ENCODE measurements at regions of chr11 and their contacts with region 1.

Region 1: GRCh38 chr11:86193297-86194095 is 51.1 kb upstream of the EED start:
- DNase-seq: peak; percentile 31 to 74 (median 63)
- H3K4me3 ChIP-seq: peak overlapping the region; percentile 33
- H3K4me3 Mint-ChIP-seq: peak overlapping the region; percentile 73 to 94 (median 92)
- H3K27ac ChIP-seq: peak overlapping the region; percentile 38
- H3K27ac Mint-ChIP-seq: peak overlapping the region; percentile 29 to 91 (median 84)
- H3K4me1 ChIP-seq: peaks cover 12% of the 10 kb centered on the region
- H3K4me1 Mint-ChIP-seq: peaks cover 13 to 15% (median 14%) of the 10 kb centered on the region in 3 donors
- H3K27me3 ChIP-seq: no peaks in the 10 kb centered on the region
- H3K27me3 Mint-ChIP-seq: no peaks in the 10 kb centered on the region

Region 2: GRCh38 chr11:86035164-86035563 is 158.3 kb before region 1 on chr11:
- CTCF ChIA-PET with region 1: interaction called, 10 read pairs
- POLR2A ChIA-PET with region 1: no interaction called
- DNase-seq: no peak
- H3K4me3 ChIP-seq: no peak overlapping the region
- H3K4me3 Mint-ChIP-seq: peak overlapping the region in 3 of 7 donors; percentile 1 to 8 (median 4)
- H3K27ac ChIP-seq: no peak overlapping the region
- H3K27ac Mint-ChIP-seq: peak overlapping the region in 6 of 8 donors; percentile 4 to 78 (median 69)
- H3K4me1 ChIP-seq: peaks cover 27% of the 10 kb centered on the region
- H3K4me1 Mint-ChIP-seq: peaks cover 61 to 80% (median 78%) of the 10 kb centered on the region in 3 donors
- H3K27me3 ChIP-seq: no peaks in the 10 kb centered on the region
- H3K27me3 Mint-ChIP-seq: no peaks in the 10 kb centered on the region

Region 3: GRCh38 chr11:86041975-86042378 is 151.5 kb before region 1 on chr11:
- CTCF ChIA-PET with region 1: interaction called, 65 read pairs
- POLR2A ChIA-PET with region 1: interaction called, 6 read pairs
- DNase-seq: peak in 4 of 5 donors; percentile 37 to 71 (median 65)
- H3K4me3 ChIP-seq: no peak overlapping the region
- H3K4me3 Mint-ChIP-seq: peak overlapping the region in 3 of 7 donors; percentile 0 to 15 (median 1)
- H3K27ac ChIP-seq: no peak overlapping the region
- H3K27ac Mint-ChIP-seq: peak overlapping the region; percentile 19 to 83 (median 54)
- H3K4me1 ChIP-seq: peaks cover 52% of the 10 kb centered on the region
- H3K4me1 Mint-ChIP-seq: peaks cover 65 to 81% (median 81%) of the 10 kb centered on the region in 3 donors
- H3K27me3 ChIP-seq: no peaks in the 10 kb centered on the region
- H3K27me3 Mint-ChIP-seq: no peaks in the 10 kb centered on the region

Region 4: DNA sequence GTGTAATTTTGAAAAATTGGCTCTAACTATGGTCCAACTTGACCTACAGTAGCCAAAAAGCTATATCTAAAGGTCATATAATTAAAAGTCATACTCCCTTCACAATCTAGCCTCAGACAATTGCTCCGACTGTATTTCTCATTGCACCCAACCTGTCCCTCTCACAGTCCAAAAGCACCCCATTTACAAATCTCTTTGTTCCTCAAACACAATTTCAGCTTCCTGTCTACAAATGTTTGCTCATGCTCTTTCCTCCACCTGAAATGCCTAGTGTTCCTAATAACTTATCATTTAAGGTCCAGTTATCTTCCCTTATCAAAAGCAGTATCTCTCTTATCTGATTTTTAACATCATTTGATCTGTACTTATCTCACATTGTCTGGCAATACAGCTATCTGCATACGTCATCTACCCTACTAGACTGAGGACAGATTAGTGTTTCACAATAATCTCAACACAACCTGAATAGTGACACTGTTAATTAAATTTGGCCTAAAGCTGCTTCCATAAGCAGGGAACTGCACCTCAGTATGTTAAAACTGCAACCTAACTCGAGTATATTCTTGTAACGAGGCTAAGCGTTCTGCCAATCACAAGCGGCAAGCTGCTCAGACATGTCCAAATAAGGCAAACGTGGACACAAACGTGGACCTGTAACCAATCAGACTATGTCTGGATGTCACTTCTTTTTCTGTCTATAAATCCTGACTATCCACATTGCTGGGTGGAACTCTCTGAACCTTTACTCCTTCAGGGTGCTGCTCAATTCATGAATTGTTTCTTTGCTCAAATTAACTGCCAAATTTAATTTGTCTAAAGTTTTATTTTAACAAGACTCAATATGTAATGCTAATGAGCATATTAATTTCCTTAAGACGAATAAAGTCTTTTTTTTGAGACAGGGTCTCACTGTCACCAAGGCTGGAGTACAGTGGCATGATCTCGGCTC is 140.5 kb before region 1 on chr11:
- CTCF ChIA-PET with region 1: interaction called, 20 read pairs
- POLR2A ChIA-PET with region 1: no interaction called
- DNase-seq: no peak
- H3K4me3 ChIP-seq: no peak overlapping the region
- H3K4me3 Mint-ChIP-seq: peak overlapping the region in 6 of 7 donors; percentile 10 to 64 (median 32)
- H3K27ac ChIP-seq: no peak overlapping the region
- H3K27ac Mint-ChIP-seq: peak overlapping the region; percentile 21 to 91 (median 60)
- H3K4me1 ChIP-seq: peaks cover 72% of the 10 kb centered on the region
- H3K4me1 Mint-ChIP-seq: peaks cover 81 to 96% (median 93%) of the 10 kb centered on the region in 3 donors
- H3K27me3 ChIP-seq: no peaks in the 10 kb centered on the region
- H3K27me3 Mint-ChIP-seq: no peaks in the 10 kb centered on the region

Region 5: GRCh38 chr11:86068951-86069407 is 124.5 kb before region 1 on chr11 and contains the start of gene PICALM:
- CTCF ChIA-PET with region 1: interaction called, 10 read pairs
- POLR2A ChIA-PET with region 1: interaction called, 5 read pairs
- DNase-seq: peak; percentile 94 to 97 (median 96)
- H3K4me3 ChIP-seq: peak within 1 kb of the TSS; percentile 85
- H3K4me3 Mint-ChIP-seq: peak within 1 kb of the TSS; percentile 92 to 100 (median 99)
- H3K27ac ChIP-seq: peak within 1 kb of the TSS; percentile 82
- H3K27ac Mint-ChIP-seq: peak within 1 kb of the TSS; percentile 91 to 99 (median 96)
- H3K4me1 ChIP-seq: peaks cover 17% of the 10 kb centered on the region
- H3K4me1 Mint-ChIP-seq: peaks cover 23 to 36% (median 32%) of the 10 kb centered on the region in 3 donors
- H3K27me3 ChIP-seq: no peaks in the 10 kb centered on the region
- H3K27me3 Mint-ChIP-seq: peaks cover 1 to 4% of the 10 kb centered on the region in 2 donors
- total RNA-seq, gene PICALM: 95.2 to 103 TPM